IMR-90 (cell line): ENCODE measurements at regions of chr22 and their contacts with region 1.

Region 1: DNA sequence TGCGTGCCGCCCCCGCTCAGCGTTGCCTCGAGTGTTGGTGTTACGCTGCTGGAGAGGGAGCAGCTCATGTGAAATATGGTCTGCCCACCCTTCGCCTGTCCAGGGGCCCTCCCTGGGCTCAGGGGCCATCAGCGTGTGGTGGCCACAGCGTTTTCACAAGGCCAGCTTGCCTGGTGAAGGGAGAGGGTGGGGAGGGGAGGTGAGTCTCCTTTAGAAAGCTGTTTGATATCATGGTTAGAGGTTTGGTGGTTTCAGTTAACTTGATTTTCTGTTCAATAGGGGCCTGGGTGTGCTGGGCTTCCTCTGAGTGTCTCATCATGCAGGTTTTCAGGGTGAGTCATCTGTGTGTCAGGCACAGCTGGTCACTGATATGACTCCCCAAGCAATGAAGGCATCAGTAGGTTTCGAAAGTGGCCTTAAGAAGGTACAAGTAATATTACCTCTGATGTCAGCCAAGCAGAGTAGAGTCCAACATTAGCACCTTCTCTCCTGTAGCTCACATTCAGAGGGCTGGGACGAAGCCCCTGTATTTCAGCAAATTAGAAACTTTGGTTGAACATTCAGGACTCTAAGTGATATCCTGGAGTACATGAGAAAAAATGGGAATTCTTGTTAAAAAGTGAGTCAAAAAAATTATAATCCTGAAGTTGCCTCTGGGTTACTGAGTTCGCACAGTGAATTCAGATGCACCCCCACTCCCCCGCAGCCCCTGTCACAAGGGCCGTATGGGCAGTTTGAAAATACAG is 172.5 kb downstream of the TBC1D22A start:
- DNase-seq: peak; percentile 98
- ATAC-seq: peak; percentile 92
- H3K4me3 ChIP-seq: no peak overlapping the region
- H3K27ac ChIP-seq: peak overlapping the region; percentile 81
- H3K4me1 ChIP-seq: peaks cover 23% of the 10 kb centered on the region
- H3K27me3 ChIP-seq: no peaks in the 10 kb centered on the region
- CTCF ChIP-seq: no peak
- POLR2A ChIP-seq: no peak
- RAD21 ChIP-seq: peak; percentile 7; the same call in 1 of the 2 replicates

Region 2: DNA sequence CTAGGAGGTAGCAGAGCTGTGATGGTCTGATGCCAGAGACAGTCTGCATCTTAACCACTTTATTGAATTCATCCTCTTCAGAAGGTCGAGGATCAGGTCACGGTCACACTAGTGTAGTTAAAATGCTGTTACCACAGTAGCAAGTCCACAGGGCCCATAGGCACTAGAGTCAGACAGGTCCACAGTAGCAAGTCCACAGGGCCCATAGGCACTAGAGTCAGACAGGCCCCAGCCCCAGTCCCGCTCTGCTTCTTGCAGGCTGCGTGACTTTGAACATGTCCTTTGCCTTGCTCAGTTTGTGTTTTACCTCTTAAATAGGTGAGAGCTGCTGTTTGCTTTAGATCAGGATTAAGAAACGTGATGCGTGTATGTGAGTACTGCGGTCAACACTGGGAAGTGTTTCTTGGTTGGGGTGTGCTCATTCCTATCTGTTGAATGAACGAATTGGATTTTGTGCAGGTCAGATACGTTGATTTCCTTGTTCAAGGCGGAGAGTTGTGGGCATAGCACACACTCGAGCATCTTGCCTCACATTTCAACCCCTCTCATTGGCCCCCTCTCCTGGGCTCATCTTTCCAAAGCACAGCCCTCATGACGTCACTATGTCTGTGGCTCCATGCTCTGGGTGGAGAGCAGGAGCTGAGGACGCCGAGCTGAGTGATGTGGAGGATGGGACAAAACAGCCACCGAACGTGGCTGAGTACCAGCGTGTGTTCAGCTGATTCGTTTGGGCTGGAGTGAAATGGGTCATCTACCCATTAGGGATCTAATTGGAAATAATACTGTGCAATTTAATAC is 19.2 kb after region 1 on chr22:
- CTCF ChIA-PET with region 1: no interaction called
- POLR2A ChIA-PET with region 1: no interaction called
- dilution Hi-C with region 1: no loop called
- in situ Hi-C with region 1: no loop called
- intact Hi-C with region 1: loop called (anchors 1 kb)
- DNase-seq: peak; percentile 13
- ATAC-seq: no peak
- H3K4me3 ChIP-seq: no peak overlapping the region
- H3K27ac ChIP-seq: no peak overlapping the region
- H3K4me1 ChIP-seq: no peaks in the 10 kb centered on the region
- H3K27me3 ChIP-seq: no peaks in the 10 kb centered on the region
- CTCF ChIP-seq: no peak
- POLR2A ChIP-seq: no peak
- RAD21 ChIP-seq: no peak